Activated CD8-positive, alpha-beta T cell treated with anti-CD3 and anti-CD28 coated beads for 36 hours (primary cell): ENCODE measurements at regions of chr1 and their contacts with region 1.

Region 1: GRCh38 chr1:197868751-197869489 is 33.5 kb upstream of the C1orf53 start:
- DNase-seq: peak; percentile 49
- ATAC-seq: peak; percentile 92
- H3K4me3 Mint-ChIP-seq: no peak overlapping the region
- H3K27ac Mint-ChIP-seq: no peak overlapping the region
- H3K4me1 Mint-ChIP-seq: no peaks in the 10 kb centered on the region
- H3K27me3 Mint-ChIP-seq: peaks cover 5% of the 10 kb centered on the region
- CTCF ChIP-seq: peak; percentile 74

Region 2: GRCh38 chr1:197521118-197521739 is 347.7 kb before region 1 on chr1:
- CTCF ChIA-PET with region 1: interaction called, 24 read pairs
- POLR2A ChIA-PET with region 1: no interaction called
- intact Hi-C with region 1: loop called (anchors 5 kb)
- DNase-seq: peak; percentile 26
- ATAC-seq: peak; percentile 79
- H3K4me3 Mint-ChIP-seq: no peak overlapping the region
- H3K27ac Mint-ChIP-seq: no peak overlapping the region
- H3K4me1 Mint-ChIP-seq: peaks cover 6% of the 10 kb centered on the region
- H3K27me3 Mint-ChIP-seq: no peaks in the 10 kb centered on the region
- CTCF ChIP-seq: peak; percentile 81

Region 3: GRCh38 chr1:197526736-197527371 is 342.1 kb before region 1 on chr1:
- CTCF ChIA-PET with region 1: interaction called, 24 read pairs
- POLR2A ChIA-PET with region 1: no interaction called
- intact Hi-C with region 1: loop called (anchors 5 kb)
- DNase-seq: no peak
- ATAC-seq: no peak
- H3K4me3 Mint-ChIP-seq: no peak overlapping the region
- H3K27ac Mint-ChIP-seq: no peak overlapping the region
- H3K4me1 Mint-ChIP-seq: no peaks in the 10 kb centered on the region
- H3K27me3 Mint-ChIP-seq: no peaks in the 10 kb centered on the region
- CTCF ChIP-seq: peak; percentile 87

Region 4: DNA sequence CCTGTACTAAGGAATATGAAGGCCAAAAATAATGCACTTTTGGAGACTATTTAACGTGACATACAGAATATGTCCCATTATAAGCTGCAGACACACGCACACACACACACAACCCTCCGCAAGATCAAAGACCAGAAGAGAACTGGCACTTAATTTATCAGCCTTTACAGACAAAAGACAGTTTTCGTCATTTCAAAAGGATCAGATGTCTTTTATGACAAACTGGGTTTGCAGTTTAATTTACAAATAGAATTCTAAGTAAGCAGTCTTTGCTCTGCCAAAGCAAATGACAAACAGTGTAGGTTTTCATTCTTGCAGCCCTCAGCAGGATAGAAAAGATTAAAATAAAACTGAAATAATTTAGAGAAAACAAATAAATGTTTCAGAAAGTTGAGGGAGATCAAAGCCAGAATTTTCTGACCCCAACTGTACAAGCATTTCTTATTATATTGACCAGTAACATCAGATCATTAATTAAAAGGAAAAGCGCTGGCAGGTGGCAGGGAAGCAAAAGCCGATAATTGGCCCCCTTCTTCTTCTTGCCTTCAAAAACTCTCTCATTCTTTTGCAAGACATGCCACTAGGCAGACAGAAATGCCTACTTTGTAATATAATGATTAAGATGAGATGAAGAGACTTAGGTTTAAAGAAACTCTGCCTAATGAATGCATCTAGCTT is 262.6 kb before region 1 on chr1:
- CTCF ChIA-PET with region 1: interaction called, 12 read pairs
- POLR2A ChIA-PET with region 1: no interaction called
- intact Hi-C with region 1: no loop called
- DNase-seq: no peak
- ATAC-seq: no peak
- H3K4me3 Mint-ChIP-seq: no peak overlapping the region
- H3K27ac Mint-ChIP-seq: no peak overlapping the region
- H3K4me1 Mint-ChIP-seq: no peaks in the 10 kb centered on the region
- H3K27me3 Mint-ChIP-seq: no peaks in the 10 kb centered on the region
- CTCF ChIP-seq: no peak

Region 5: GRCh38 chr1:197614916-197615692 is 253.8 kb before region 1 on chr1:
- CTCF ChIA-PET with region 1: interaction called, 76 read pairs
- POLR2A ChIA-PET with region 1: no interaction called
- intact Hi-C with region 1: loop called (anchors 5 kb)
- DNase-seq: peak; percentile 43
- ATAC-seq: peak; percentile 77
- H3K4me3 Mint-ChIP-seq: no peak overlapping the region
- H3K27ac Mint-ChIP-seq: no peak overlapping the region
- H3K4me1 Mint-ChIP-seq: no peaks in the 10 kb centered on the region
- H3K27me3 Mint-ChIP-seq: no peaks in the 10 kb centered on the region
- CTCF ChIP-seq: peak; percentile 62

Region 6: GRCh38 chr1:197692965-197693364 is 176.0 kb before region 1 on chr1:
- CTCF ChIA-PET with region 1: interaction called, 3 read pairs
- POLR2A ChIA-PET with region 1: no interaction called
- intact Hi-C with region 1: loop called (anchors 5 kb)
- DNase-seq: no peak
- ATAC-seq: no peak
- H3K4me3 Mint-ChIP-seq: no peak overlapping the region
- H3K27ac Mint-ChIP-seq: no peak overlapping the region
- H3K4me1 Mint-ChIP-seq: peaks cover 5% of the 10 kb centered on the region
- H3K27me3 Mint-ChIP-seq: no peaks in the 10 kb centered on the region
- CTCF ChIP-seq: no peak

Region 7: DNA sequence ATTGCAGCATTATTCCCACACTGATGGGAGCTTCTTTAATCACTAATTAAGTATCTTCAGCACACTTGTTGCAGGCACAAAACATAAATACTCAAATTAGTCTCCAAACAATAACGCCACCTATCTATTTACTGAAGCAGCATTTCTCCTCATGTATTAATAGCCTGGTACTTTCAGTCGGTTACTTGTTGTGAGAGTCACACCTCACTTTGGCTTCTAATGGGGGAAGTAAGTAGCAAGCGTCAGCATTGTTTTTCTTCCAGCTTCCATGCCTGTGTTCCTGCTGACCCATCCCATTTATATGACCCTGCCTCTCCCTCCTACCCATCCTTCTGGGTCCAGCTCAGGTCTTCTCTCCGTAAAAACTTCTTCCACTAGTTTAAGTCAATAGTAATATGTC is 61.7 kb before region 1 on chr1:
- CTCF ChIA-PET with region 1: no interaction called
- POLR2A ChIA-PET with region 1: no interaction called
- intact Hi-C with region 1: no loop called
- DNase-seq: no peak
- ATAC-seq: no peak
- H3K4me3 Mint-ChIP-seq: no peak overlapping the region
- H3K27ac Mint-ChIP-seq: no peak overlapping the region
- H3K4me1 Mint-ChIP-seq: peaks cover 8% of the 10 kb centered on the region
- H3K27me3 Mint-ChIP-seq: no peaks in the 10 kb centered on the region
- CTCF ChIP-seq: no peak

Region 8: DNA sequence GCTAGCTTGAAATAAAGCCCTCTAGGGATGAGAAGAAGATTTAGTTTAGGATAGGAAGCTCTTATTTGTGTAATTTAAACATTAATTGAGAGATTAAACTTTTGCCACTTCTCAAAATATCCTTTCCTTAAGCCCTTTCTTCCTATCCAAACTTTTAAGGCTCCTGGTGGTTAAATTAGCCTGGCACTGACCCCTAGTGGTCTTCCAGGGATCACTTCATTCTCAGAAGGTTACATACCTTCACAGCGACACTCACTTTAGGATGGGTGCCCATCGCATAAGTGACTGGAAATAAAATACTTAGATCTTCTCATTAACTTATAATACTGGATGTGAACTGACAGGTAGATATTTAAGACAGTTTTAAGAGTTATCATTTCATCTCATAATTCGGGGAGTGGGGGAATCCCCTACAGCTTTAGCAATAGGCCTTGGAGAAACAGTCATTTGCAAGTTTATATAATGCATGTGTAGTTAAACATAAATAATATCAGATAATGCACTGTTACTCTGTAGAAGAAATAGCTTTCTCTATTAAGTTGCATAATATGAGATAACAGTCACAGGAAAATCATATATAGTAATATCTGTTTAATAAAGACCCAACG is 55.7 kb after region 1 on chr1:
- CTCF ChIA-PET with region 1: interaction called, 9 read pairs
- POLR2A ChIA-PET with region 1: no interaction called
- intact Hi-C with region 1: loop called (anchors 5 kb)
- DNase-seq: peak; percentile 61
- ATAC-seq: peak; percentile 67
- H3K4me3 Mint-ChIP-seq: no peak overlapping the region
- H3K27ac Mint-ChIP-seq: no peak overlapping the region
- H3K4me1 Mint-ChIP-seq: peaks cover 22% of the 10 kb centered on the region
- H3K27me3 Mint-ChIP-seq: peaks cover 67% of the 10 kb centered on the region
- CTCF ChIP-seq: peak; percentile 74

Region 9: DNA sequence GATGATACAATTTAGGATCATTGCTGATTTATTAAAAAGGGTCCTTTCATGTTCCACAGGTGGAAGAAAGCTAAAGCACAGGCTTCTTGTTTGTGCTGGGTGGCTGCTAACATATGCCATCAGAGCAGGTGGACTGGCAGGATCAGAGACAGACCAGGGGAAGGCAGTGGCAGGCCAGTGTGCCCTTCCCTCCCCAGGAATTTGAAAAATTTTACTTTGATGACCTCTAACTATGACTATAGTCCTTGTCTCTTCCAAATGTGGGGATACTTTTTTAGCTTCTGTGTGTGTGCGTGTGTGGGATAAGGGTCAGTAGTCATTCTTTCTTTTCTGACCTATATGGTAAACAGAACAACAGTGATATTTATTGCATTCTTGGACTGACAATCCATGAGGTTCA is 98.1 kb after region 1 on chr1:
- CTCF ChIA-PET with region 1: no interaction called
- POLR2A ChIA-PET with region 1: no interaction called
- intact Hi-C with region 1: no loop called
- DNase-seq: no peak
- ATAC-seq: no peak
- H3K4me3 Mint-ChIP-seq: no peak overlapping the region
- H3K27ac Mint-ChIP-seq: no peak overlapping the region
- H3K4me1 Mint-ChIP-seq: no peaks in the 10 kb centered on the region
- H3K27me3 Mint-ChIP-seq: peaks cover 2% of the 10 kb centered on the region
- CTCF ChIP-seq: no peak

Region 10: GRCh38 chr1:197994907-197995407 is 126.0 kb after region 1 on chr1:
- CTCF ChIA-PET with region 1: no interaction called
- POLR2A ChIA-PET with region 1: no interaction called
- intact Hi-C with region 1: no loop called
- DNase-seq: no peak
- ATAC-seq: no peak
- H3K4me3 Mint-ChIP-seq: no peak overlapping the region
- H3K27ac Mint-ChIP-seq: no peak overlapping the region
- H3K4me1 Mint-ChIP-seq: no peaks in the 10 kb centered on the region
- H3K27me3 Mint-ChIP-seq: no peaks in the 10 kb centered on the region
- CTCF ChIP-seq: no peak